Pancreas (tissue), 10 donors: ENCODE measurements at regions of chr11 and their contacts with region 1.

Region 1: GRCh38 chr11:77549821-77550550 is 39.8 kb upstream of the AQP11 start:
- DNase-seq: no peak
- ATAC-seq: no peak
- H3K4me3 ChIP-seq: no peak overlapping the region
- H3K27ac ChIP-seq: no peak overlapping the region
- H3K4me1 ChIP-seq: no peaks in the 10 kb centered on the region
- H3K27me3 ChIP-seq: no peaks in the 10 kb centered on the region
- CTCF ChIP-seq: no peak

Region 2: GRCh38 chr11:76734456-76735420 is 815.2 kb before region 1 on chr11:
- intact Hi-C with region 1: no loop called
- DNase-seq: no peak
- ATAC-seq: no peak
- H3K4me3 ChIP-seq: no peak overlapping the region
- H3K27ac ChIP-seq: no peak overlapping the region
- H3K4me1 ChIP-seq: no peaks in the 10 kb centered on the region
- H3K27me3 ChIP-seq: no peaks in the 10 kb centered on the region
- CTCF ChIP-seq: no peak

Region 3: DNA sequence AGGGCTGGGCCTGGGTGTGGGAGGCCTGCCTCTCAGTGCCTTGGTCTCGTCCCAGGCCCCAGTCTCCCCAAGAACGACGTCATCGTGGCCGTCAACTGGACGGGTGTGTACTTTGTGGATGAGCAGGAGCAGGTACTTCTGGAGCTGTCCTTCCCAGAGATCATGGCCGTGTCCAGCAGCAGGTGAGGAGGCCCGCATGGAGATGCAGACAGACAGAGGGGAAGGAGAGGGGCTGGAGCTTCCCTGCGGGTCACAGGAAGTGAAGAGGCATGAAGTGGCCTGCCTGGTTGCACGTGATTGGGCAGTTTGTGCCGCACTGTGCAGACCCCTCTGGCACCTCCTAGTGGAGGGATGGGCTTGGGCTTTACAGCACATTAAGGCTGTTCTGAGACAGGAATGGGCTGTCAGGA is 351.5 kb before region 1 on chr11:
- intact Hi-C with region 1: loop called in 2 of 3 experiments (anchors 5 kb)
- DNase-seq: peak in 4 of 6 donors; percentile 13 to 45 (median 24)
- ATAC-seq: peak in 1 of 4 donors; percentile 10
- H3K4me3 ChIP-seq: no peak overlapping the region
- H3K27ac ChIP-seq: no peak overlapping the region
- H3K4me1 ChIP-seq: no peaks in the 10 kb centered on the region
- H3K27me3 ChIP-seq: no peaks in the 10 kb centered on the region
- CTCF ChIP-seq: peak in 1 of 4 donors; percentile 6